ENCODE measurements at regions of chr10 and their contacts with region 1.

Region 1: DNA sequence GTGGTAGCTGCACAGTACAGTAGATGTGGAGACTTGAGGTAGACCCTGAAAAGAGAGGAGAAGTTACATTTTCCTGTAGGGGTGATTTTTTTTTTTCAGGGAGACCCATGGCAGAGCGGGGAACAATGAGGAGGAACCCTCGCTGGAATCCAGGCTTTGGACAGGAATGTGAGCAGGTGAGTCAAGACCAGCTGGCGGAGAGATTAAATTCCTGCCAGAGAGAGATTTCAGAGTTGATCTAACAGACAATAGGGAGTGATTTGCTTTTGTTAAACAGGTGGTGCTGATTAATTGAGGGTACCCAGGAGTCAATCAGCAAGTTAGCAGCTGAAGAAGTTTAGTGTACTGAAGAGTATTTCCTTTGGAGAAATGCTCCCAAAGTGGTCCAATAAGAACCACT is 41.6 kb upstream of the MINDY3 start:
- DNase-seq: no peak
- ATAC-seq: no peak
- H3K4me3 ChIP-seq: no peak overlapping the region
- H3K27ac ChIP-seq: no peak overlapping the region
- H3K4me1 ChIP-seq: no peaks in the 10 kb centered on the region
- H3K27me3 ChIP-seq: no peaks in the 10 kb centered on the region; the same call in 1 of the 2 replicates
- CTCF ChIP-seq: no peak

Region 2: GRCh38 chr10:16545116-16545736 is 643.3 kb after region 1 on chr10:
- CTCF ChIA-PET with region 1: interaction called, 8 read pairs
- POLR2A ChIA-PET with region 1: no interaction called
- in situ Hi-C with region 1: no loop called
- intact Hi-C with region 1: loop called (anchors 10 kb)
- DNase-seq: peak; percentile 22
- ATAC-seq: no peak
- H3K4me3 ChIP-seq: no peak overlapping the region
- H3K27ac ChIP-seq: no peak overlapping the region
- H3K4me1 ChIP-seq: peaks cover 3% of the 10 kb centered on the region; the same call in 1 of the 2 replicates
- H3K27me3 ChIP-seq: no peaks in the 10 kb centered on the region; the same call in 1 of the 2 replicates
- CTCF ChIP-seq: peak; percentile 75

Region 3: DNA sequence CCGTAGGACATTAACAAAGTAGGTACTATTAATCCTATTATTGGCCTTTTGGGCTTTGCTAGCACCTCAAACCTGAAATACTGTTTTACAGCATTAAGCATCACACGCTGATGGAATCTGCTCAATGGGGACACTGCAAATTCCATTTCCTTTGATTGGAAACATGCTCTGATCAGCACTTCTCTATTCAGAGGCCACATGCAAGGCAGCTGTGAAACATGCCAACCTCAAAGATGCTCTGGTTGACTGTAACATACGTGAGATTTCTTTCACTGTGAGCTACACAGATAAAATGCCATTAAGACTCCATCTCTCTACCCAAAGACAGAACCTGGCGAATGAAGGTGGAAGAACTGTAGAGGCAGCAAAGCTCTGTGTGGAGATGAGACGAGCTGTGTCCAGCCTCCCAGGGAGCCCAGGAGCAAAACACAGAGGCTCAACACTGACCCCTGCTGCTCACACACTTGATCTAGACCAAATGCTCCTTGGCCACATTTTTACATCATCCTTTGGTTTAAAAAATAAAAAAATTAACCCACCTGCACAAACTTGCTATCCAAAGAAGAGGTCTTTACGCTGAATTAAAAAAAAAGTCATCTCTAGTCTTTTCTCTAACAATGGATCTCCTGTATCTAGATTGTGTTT is 907.3 kb after region 1 on chr10:
- CTCF ChIA-PET with region 1: no interaction called
- POLR2A ChIA-PET with region 1: no interaction called
- in situ Hi-C with region 1: no loop called
- intact Hi-C with region 1: loop called (anchors 10 kb)
- DNase-seq: no peak
- ATAC-seq: peak; percentile 85
- H3K4me3 ChIP-seq: no peak overlapping the region
- H3K27ac ChIP-seq: no peak overlapping the region
- H3K4me1 ChIP-seq: no peaks in the 10 kb centered on the region
- H3K27me3 ChIP-seq: no peaks in the 10 kb centered on the region
- CTCF ChIP-seq: peak; percentile 70